ENCODE measurements at regions of chr5 and their contacts with region 1.

Region 1: DNA sequence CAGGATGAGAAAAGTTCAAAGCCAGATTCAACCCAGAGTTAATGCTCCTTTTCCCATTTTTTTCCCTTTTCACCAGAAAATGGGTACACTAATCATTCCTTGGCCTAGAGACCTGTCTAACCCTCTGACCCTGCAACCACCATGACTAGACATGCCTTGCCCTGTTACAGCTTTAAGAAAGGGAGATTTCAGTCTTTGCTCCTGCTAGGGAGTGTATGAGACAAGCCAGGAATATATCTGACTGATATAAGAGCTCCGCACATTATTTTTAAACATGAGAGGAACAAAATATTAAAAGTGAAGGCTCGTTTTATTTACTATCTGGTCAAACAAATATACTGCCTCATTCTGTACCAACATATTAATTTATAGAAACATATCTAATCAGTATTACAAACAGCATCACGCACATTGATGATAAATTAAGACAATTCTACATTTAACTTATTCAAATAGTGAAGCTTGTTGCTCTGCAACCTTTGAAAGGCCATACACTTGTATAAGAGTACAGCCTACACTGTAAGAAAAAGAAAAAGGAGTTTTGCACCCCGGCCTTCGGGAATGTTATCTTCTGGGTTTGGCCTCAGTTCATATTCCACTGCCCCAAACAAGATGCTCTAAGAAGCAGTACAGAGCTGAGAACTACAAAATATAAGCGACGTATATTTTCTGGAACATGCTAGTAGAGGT is 132.7 kb downstream of the FBXL17 start:
- DNase-seq: no peak
- H3K4me3 ChIP-seq: no peak overlapping the region
- H3K27ac ChIP-seq: no peak overlapping the region
- H3K4me1 ChIP-seq: no peaks in the 10 kb centered on the region
- H3K27me3 ChIP-seq: no peaks in the 10 kb centered on the region
- CTCF ChIP-seq: no peak

Region 2: DNA sequence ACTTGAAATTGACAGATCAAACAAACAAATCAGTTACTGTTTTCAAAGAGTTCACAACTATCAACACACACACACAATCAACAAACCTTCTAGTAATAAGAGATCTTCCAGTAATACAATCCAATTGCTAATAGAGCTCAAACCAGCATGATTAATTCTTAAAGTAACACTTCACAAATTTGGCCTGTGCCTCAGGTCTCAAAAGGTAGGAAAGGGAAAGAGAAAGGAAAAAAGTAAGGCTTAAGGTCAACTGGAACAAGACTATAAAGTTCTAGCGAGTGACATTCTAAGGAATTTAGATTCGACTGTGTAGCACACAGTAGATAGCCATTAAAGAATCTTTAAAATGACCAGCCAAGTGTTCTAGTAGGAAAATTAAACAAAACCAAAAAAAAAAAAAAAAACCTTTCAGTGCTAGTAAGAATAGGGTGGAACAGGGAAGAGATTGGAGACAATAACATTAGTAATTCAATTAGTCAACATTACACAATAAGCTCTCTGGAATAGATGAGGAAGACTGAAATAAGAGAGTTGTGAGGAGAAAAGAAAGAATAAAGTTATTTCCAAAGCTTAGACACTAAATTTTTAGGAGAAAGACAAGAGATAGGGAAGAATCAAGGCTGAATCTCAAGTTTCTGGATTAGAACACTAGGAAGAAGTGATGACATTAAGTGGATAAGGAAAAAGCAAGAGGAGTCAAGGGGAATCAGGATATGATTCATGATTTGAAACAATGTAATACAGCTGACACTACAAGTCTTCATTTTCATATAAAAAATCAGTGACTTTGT is 46.5 kb after region 1 on chr5:
- CTCF ChIA-PET with region 1: no interaction called
- POLR2A ChIA-PET with region 1: interaction called, 15 read pairs
- intact Hi-C with region 1: no loop called
- DNase-seq: peak in 1 of 2 experiments; percentile 38
- H3K4me3 ChIP-seq: no peak overlapping the region
- H3K27ac ChIP-seq: no peak overlapping the region
- H3K4me1 ChIP-seq: peaks cover 13% of the 10 kb centered on the region
- H3K27me3 ChIP-seq: no peaks in the 10 kb centered on the region
- CTCF ChIP-seq: no peak